ENCODE measurements at regions of chr6 and their contacts with region 1.

Region 1: DNA sequence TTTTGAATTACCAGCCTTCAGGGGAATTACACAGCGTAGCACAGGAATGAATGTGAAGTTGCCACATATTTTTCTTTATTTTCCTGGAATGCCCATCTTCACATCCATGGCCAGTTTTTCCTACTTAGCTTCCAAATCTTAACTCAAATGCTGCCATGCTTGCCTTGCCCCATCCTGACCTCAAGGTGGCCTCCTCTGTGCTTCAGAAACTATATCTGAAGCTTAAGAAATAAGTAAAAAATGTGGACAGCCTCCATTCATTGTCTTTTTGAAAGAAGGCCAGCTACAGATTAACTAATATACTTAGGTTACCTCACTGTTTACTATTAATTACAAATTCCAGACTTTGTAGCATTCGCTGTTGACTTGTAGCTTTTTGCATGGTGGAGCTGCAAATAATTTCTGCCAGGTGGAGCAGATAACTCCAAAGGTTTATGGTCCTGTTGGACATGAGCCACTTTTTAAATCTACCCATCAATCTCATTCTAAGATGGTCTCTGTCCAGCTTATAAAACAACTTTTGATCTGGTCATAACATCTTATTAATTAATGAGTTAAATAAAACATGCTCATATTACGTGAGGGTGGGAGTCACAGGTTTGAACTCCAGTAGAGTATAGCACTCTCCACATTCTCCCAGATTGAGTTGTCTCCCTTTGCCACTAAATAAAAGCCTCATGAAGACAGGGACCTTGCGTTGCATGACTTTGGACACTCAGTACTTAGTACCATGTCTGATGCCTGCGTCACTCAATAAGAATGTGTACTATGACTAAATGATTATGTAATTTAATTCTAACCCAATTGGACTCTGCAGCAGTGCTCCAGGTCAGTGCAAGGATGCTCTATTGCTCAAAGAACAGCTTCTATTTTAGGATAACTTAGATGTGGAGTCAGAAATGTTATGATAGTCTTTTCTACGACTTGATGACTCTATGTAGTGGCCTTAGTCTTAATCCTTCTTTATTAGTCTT is 678.6 kb upstream of the CITED2 start:
- DNase-seq: peak in 1 of 2 experiments; percentile 9
- H3K4me3 ChIP-seq: no peak overlapping the region
- H3K4me3 Mint-ChIP-seq: no peak overlapping the region
- H3K27ac Mint-ChIP-seq: no peak overlapping the region
- H3K4me1 ChIP-seq: no peaks in the 10 kb centered on the region; the same call in 1 of the 2 replicates
- H3K4me1 Mint-ChIP-seq: no peaks in the 10 kb centered on the region
- H3K27me3 ChIP-seq: no peaks in the 10 kb centered on the region
- H3K27me3 Mint-ChIP-seq: peaks cover 3% of the 10 kb centered on the region
- CTCF ChIP-seq: peak in 1 of 2 experiments; percentile 34

Region 2: DNA sequence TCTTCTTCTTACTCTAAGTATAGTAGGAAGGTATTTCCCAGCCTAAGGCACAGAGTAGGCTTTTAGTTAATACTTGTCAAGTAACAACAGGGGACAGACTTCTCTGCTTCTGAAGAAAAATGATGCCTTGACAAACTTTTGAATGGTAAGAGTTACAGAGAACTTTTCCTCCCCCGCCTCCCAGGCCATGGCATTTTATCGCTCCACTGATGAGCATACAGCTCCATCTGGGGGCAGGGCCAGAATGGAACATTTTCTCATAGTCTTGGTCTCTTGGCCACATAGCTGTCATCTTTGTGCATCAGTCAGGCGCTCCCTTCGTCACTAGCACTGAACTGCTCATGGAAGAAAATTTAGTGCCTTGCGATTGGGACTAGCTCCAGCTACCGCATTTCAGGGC is 388.2 kb after region 1 on chr6:
- CTCF ChIA-PET with region 1: no interaction called
- POLR2A ChIA-PET with region 1: no interaction called
- intact Hi-C with region 1: loop called (anchors 10 kb)
- DNase-seq: peak; percentile 49 to 50
- H3K4me3 ChIP-seq: no peak overlapping the region
- H3K4me3 Mint-ChIP-seq: no peak overlapping the region
- H3K27ac Mint-ChIP-seq: no peak overlapping the region
- H3K4me1 ChIP-seq: no peaks in the 10 kb centered on the region
- H3K4me1 Mint-ChIP-seq: no peaks in the 10 kb centered on the region
- H3K27me3 ChIP-seq: no peaks in the 10 kb centered on the region
- H3K27me3 Mint-ChIP-seq: no peaks in the 10 kb centered on the region
- CTCF ChIP-seq: peak in 1 of 2 experiments; percentile 42